ENCODE measurements at regions of chr9 and their contacts with region 1.

Region 1: DNA sequence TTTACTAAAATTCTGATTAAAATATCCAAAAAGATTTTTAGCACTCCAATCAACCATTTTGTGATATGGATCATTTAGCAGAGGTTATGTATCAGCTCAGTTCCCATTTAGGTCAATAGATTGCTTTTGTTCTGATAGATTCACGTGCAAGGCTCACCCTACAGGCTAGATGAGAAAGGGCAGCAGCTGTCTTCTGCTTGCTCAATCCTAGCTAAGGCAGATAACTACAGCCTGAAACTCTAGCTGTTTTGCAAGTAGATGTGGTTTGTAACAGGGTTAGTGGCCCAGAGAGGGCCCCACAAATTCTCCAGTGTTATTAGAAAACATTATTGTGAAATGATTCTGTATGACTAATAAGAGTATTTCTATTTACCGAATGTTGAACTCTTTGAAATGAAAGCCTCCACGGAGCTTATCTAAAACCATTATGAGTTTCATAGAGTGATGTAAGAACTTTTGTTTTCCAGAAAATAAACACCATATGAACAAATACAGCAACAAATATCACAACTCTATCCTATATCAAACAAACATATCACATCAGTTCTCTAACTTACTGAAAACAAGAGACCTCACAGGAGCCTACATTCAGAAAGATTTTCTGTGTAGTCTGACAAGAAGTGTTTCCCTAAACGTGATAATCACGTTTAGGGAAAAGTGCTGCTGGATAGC is 841.9 kb upstream of the ACO1 start:
- DNase-seq: peak; percentile 76
- H3K4me3 Mint-ChIP-seq: peak overlapping the region; percentile 12
- H3K27ac Mint-ChIP-seq: peak overlapping the region; percentile 49
- H3K4me1 Mint-ChIP-seq: peaks cover 14% of the 10 kb centered on the region
- H3K27me3 Mint-ChIP-seq: no peaks in the 10 kb centered on the region
- CTCF ChIP-seq: peak; percentile 42

Region 2: GRCh38 chr9:31304576-31304975 is 237.9 kb before region 1 on chr9:
- CTCF ChIA-PET with region 1: interaction called, 9 read pairs
- POLR2A ChIA-PET with region 1: interaction called, 4 read pairs
- intact Hi-C with region 1: loop called (anchors 10 kb)
- DNase-seq: peak; percentile 84
- H3K4me3 Mint-ChIP-seq: peak overlapping the region; percentile 33
- H3K27ac Mint-ChIP-seq: peak overlapping the region; percentile 88
- H3K4me1 Mint-ChIP-seq: peaks cover 8% of the 10 kb centered on the region
- H3K27me3 Mint-ChIP-seq: no peaks in the 10 kb centered on the region
- CTCF ChIP-seq: no peak

Region 3: GRCh38 chr9:31848505-31849285 is 306.2 kb after region 1 on chr9:
- CTCF ChIA-PET with region 1: no interaction called
- POLR2A ChIA-PET with region 1: no interaction called
- intact Hi-C with region 1: no loop called
- DNase-seq: no peak
- H3K4me3 Mint-ChIP-seq: no peak overlapping the region
- H3K27ac Mint-ChIP-seq: no peak overlapping the region
- H3K4me1 Mint-ChIP-seq: no peaks in the 10 kb centered on the region
- H3K27me3 Mint-ChIP-seq: peaks cover 52% of the 10 kb centered on the region
- CTCF ChIP-seq: no peak

Measured in MCF 10A (cell line).